ENCODE measurements at regions of chr14 and their contacts with region 1.

Region 1: DNA sequence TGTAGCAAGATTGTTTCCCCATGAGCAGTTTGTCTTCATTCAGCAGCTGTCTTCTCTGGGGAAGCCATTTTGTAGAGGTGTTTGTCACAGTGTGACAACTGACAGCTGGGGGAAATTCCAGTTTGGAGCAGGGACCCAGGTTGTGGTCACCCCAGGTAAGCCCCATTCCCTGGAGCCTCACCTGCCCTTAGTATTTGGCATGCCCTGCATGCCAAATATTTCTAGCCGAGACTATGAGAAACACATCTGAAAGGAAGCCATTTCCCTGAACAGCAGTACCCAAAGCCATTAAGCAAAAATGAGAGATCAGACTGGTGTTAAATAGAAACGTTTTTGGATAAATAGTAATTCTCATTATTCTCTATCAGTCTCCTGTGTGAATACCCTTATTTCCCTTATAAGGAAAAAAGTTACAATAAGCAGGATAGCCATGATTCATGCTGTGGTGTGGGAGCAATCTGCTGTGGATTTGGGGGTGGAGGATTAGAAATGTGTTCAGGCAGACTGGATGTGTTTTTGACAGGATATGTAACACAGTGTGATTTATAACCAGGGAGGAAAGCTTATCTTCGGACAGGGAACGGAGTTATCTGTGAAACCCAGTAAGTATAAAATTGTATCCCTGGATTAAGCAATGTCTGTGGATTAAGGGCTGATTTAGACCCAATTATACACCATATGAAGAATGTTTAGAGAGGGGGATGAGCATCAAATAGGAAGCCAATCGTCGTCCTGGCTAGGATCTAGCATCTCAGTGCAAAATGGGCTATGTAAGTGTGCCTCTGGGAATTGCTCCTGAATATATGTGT is 68.9 kb downstream of the DAD1 start:
- DNase-seq: no peak
- H3K4me3 Mint-ChIP-seq: peak overlapping the region; percentile 84
- H3K27ac Mint-ChIP-seq: peak overlapping the region; percentile 95
- H3K4me1 Mint-ChIP-seq: peaks cover 98% of the 10 kb centered on the region
- H3K27me3 Mint-ChIP-seq: no peaks in the 10 kb centered on the region

Region 2: GRCh38 chr14:21647380-21647779 is 872.7 kb before region 1 on chr14:
- intact Hi-C with region 1: loop called (anchors 10 kb)
- DNase-seq: no peak
- H3K4me3 Mint-ChIP-seq: no peak overlapping the region
- H3K27ac Mint-ChIP-seq: no peak overlapping the region
- H3K4me1 Mint-ChIP-seq: no peaks in the 10 kb centered on the region
- H3K27me3 Mint-ChIP-seq: peaks cover 3% of the 10 kb centered on the region

Region 3: GRCh38 chr14:22386924-22387775 is 132.9 kb before region 1 on chr14:
- intact Hi-C with region 1: no loop called
- DNase-seq: no peak
- H3K4me3 Mint-ChIP-seq: no peak overlapping the region
- H3K27ac Mint-ChIP-seq: no peak overlapping the region
- H3K4me1 Mint-ChIP-seq: no peaks in the 10 kb centered on the region
- H3K27me3 Mint-ChIP-seq: no peaks in the 10 kb centered on the region

Region 4: GRCh38 chr14:22531451-22532344 is 11.6 kb after region 1 on chr14:
- intact Hi-C with region 1: loop called (anchors 1 kb)
- DNase-seq: no peak
- H3K4me3 Mint-ChIP-seq: peak overlapping the region; percentile 80
- H3K27ac Mint-ChIP-seq: peak overlapping the region; percentile 95
- H3K4me1 Mint-ChIP-seq: peaks cover 90% of the 10 kb centered on the region
- H3K27me3 Mint-ChIP-seq: no peaks in the 10 kb centered on the region

Region 5: GRCh38 chr14:22589096-22589839 is 69.2 kb after region 1 on chr14 and contains the start of gene DAD1:
- intact Hi-C with region 1: no loop called
- DNase-seq: peak; percentile 100
- H3K4me3 Mint-ChIP-seq: peak within 1 kb of the TSS; percentile 91
- H3K27ac Mint-ChIP-seq: peak within 1 kb of the TSS; percentile 96
- H3K4me1 Mint-ChIP-seq: peaks cover 55% of the 10 kb centered on the region
- H3K27me3 Mint-ChIP-seq: no peaks in the 10 kb centered on the region
- total RNA-seq, gene DAD1: 228 and 229 TPM in 2 replicates

Measured in activated T-helper 1 cell treated with anti-CD3 and anti-CD28 coated beads, Interleukin-12 subunit alpha, Interleukin-12 subunit beta, Interleukin-2, Interleukin-4 antibody, amounts not matched to agents 30 ng/mL and 10 ng/mL and 1 ng/mL, durations not matched to agents 14 hours and 24 hours and 36 hours (primary cell).